Activated B cell treated with CpG ODN at 0.5 μM for 24 hours (primary cell): ENCODE measurements at regions of chr14 and their contacts with region 1.

Region 1: DNA sequence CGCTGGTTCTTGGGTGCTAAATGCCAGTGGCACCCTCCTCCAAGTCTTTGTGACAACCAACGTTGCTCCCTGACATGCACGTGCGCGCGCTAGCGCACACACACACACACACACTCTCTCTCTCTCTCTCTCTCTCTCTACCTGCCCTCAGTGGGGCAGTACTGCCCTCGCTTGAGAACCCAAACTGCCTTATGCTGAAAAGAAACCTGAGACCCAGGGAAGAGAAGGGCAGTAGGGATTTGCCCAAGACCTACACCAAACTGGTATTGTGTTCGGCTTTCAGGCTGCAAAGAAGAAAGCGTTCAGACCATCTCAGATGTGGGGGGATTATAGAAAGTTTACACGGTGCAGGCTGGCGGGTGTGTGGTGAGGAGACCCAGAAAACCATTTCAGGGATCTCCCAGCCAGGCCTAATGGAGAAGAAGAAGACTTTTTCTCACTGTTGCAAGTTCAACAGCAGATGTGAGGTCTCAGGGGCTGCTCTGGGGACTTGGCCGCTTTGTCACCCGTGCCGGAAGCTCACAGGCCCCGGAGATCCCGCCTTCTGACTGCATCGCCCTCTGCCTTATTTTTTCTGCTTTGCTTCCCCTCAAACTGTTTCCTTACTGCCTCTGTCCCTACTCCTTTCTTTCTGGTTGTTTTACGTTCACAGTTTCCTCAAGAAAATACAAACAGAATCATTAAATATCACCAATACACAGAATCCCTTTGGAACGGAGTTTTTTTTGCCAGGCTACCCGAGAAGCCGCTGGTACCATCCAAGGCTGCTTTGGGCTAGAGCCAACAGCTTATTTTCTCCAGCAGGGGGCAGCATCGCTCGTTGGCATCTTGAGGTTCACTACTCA is 82.4 kb downstream of the PPM1A start:
- DNase-seq: peak; percentile 53
- ATAC-seq: peak; percentile 68
- H3K4me3 Mint-ChIP-seq: peak overlapping the region; percentile 96
- H3K27ac Mint-ChIP-seq: peak overlapping the region; percentile 92
- H3K4me1 Mint-ChIP-seq: peaks cover 26% of the 10 kb centered on the region
- H3K27me3 Mint-ChIP-seq: peaks cover 19% of the 10 kb centered on the region
- CTCF ChIP-seq: peak; percentile 70

Region 2: DNA sequence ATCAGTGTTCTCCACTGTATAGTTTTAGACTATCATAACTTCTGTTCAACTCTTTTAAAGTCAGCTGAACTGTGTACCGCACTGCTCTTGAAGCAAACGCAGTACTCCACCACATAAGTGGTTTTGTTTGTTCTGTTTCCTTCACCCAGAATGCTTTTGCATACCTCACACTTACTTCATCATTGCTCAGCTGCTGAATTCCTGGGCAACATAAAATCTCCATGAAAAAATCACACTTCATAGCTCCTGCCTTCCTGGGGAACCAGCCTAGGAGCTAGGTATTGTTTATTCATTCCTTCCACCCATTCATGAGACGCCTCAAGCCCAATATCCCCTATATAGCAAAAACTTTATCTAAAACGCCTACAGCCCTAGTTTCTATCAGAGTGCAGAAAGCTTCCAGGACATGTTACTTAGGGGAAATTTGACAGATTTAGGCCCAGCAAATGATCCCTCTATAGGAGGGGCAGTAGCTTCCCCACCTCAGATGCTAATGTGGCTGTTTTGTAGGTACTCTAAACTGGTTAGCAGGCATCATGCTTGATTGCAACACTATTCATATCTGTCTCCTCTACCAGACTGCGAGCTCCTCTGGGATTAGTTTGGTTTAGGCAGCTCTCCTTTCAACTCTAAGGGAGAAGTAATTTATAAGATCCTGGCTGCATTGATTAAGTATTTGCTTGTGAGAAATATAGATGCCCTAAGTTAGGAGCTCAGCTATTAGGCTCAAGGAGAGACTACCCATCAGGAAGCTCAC is 367.0 kb before region 1 on chr14:
- CTCF ChIA-PET with region 1: interaction called, 5 read pairs
- POLR2A ChIA-PET with region 1: interaction called, 3 read pairs
- intact Hi-C with region 1: loop called (anchors 10 kb)
- DNase-seq: no peak
- ATAC-seq: peak; percentile 25
- H3K4me3 Mint-ChIP-seq: peak overlapping the region; percentile 86
- H3K27ac Mint-ChIP-seq: peak overlapping the region; percentile 93
- H3K4me1 Mint-ChIP-seq: peaks cover 14% of the 10 kb centered on the region
- H3K27me3 Mint-ChIP-seq: no peaks in the 10 kb centered on the region
- CTCF ChIP-seq: no peak

Region 3: GRCh38 chr14:60164712-60165546 is 166.5 kb before region 1 on chr14 and contains the start of gene DHRS7:
- CTCF ChIA-PET with region 1: interaction called, 5 read pairs
- POLR2A ChIA-PET with region 1: no interaction called
- intact Hi-C with region 1: loop called (anchors 2 kb)
- DNase-seq: peak; percentile 70
- ATAC-seq: peak; percentile 88
- H3K4me3 Mint-ChIP-seq: peak within 1 kb of the TSS; percentile 99
- H3K27ac Mint-ChIP-seq: peak within 1 kb of the TSS; percentile 99
- H3K4me1 Mint-ChIP-seq: peaks cover 39% of the 10 kb centered on the region
- H3K27me3 Mint-ChIP-seq: no peaks in the 10 kb centered on the region
- CTCF ChIP-seq: no peak
- total RNA-seq, gene DHRS7: 41.5 and 47.1 TPM in 2 replicates

Region 4: DNA sequence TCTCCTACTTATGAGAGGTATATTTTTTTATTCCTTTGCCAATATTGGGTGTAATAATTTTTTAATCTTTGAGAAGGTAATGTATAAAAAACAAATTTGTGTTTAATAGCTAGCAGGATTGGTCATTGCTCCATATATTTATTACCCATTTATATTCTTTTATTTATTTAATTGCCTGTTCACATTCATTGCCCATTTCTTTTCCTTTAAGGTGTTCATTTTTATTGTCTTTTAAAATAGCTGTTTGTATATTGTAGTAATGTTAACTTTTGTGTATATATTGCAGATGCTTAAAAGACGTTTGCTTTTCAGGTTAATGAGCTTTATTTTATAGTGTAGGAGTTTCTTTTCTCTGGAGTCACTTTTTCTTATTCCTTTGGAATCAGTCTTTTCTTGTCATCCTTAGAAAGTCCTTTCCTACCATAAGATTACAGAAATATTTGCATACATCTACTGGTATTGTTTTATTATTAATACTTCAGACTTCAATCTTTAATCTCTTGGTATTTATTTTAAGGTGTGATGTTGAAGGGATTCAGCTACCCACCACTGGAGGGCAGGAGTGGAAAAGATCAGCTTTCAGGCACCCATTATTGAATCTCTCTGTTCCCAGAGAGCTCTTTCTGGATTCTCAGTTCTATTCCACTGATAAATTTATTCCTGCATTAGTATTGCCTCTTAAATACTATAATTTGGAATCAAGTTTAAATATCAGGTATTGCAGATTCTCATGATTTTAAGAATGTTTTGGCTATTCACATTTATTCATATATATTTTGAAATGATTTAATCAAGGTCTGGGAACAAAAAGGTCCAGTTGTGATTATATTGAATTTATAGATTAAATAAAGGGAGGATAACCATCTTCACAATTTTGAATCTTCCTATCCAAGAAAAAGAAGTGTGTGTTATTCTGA is 65.1 kb before region 1 on chr14:
- CTCF ChIA-PET with region 1: interaction called, 13 read pairs
- POLR2A ChIA-PET with region 1: interaction called, 4 read pairs
- intact Hi-C with region 1: loop called (anchors 2 kb)
- DNase-seq: no peak
- ATAC-seq: peak; percentile 54
- H3K4me3 Mint-ChIP-seq: no peak overlapping the region
- H3K27ac Mint-ChIP-seq: no peak overlapping the region
- H3K4me1 Mint-ChIP-seq: peaks cover 22% of the 10 kb centered on the region
- H3K27me3 Mint-ChIP-seq: no peaks in the 10 kb centered on the region
- CTCF ChIP-seq: no peak

Region 5: GRCh38 chr14:60622917-60623257 is 291.5 kb after region 1 on chr14:
- CTCF ChIA-PET with region 1: no interaction called
- POLR2A ChIA-PET with region 1: no interaction called
- intact Hi-C with region 1: loop called (anchors 10 kb)
- DNase-seq: no peak
- ATAC-seq: no peak
- H3K4me3 Mint-ChIP-seq: no peak overlapping the region
- H3K27ac Mint-ChIP-seq: no peak overlapping the region
- H3K4me1 Mint-ChIP-seq: peaks cover 5% of the 10 kb centered on the region
- H3K27me3 Mint-ChIP-seq: peaks cover 17% of the 10 kb centered on the region
- CTCF ChIP-seq: no peak

Region 6: GRCh38 chr14:60980811-60981632 is 649.6 kb after region 1 on chr14 and contains the starts of genes SLC38A6 and TRMT5:
- CTCF ChIA-PET with region 1: no interaction called
- POLR2A ChIA-PET with region 1: no interaction called
- intact Hi-C with region 1: loop called (anchors 2 kb)
- DNase-seq: peak; percentile 88
- ATAC-seq: peak; percentile 83
- H3K4me3 Mint-ChIP-seq: no peak within 1 kb of the TSS
- H3K27ac Mint-ChIP-seq: no peak within 1 kb of the TSS
- H3K4me1 Mint-ChIP-seq: peaks cover 17% of the 10 kb centered on the region
- H3K27me3 Mint-ChIP-seq: no peaks in the 10 kb centered on the region
- CTCF ChIP-seq: no peak
- total RNA-seq, gene SLC38A6: 10.4 and 10.8 TPM in 2 replicates
- total RNA-seq, gene TRMT5: 11.5 and 13.2 TPM in 2 replicates